Prostate gland (tissue), 2 donors: ENCODE measurements at regions of chrX and their contacts with region 1.

Region 1: GRCh38 chrX:12080265-12080664 is 58.0 kb upstream of the FRMPD4 start:
- DNase-seq: no peak
- H3K4me3 ChIP-seq: no peak overlapping the region
- H3K27ac ChIP-seq: no peak overlapping the region
- H3K4me1 ChIP-seq: no peaks in the 10 kb centered on the region
- H3K27me3 ChIP-seq: no peaks in the 10 kb centered on the region
- CTCF ChIP-seq: peak in 3 of 4 experiments; percentile 41 to 43 (median 42)
- POLR2A ChIP-seq: no peak

Region 2: DNA sequence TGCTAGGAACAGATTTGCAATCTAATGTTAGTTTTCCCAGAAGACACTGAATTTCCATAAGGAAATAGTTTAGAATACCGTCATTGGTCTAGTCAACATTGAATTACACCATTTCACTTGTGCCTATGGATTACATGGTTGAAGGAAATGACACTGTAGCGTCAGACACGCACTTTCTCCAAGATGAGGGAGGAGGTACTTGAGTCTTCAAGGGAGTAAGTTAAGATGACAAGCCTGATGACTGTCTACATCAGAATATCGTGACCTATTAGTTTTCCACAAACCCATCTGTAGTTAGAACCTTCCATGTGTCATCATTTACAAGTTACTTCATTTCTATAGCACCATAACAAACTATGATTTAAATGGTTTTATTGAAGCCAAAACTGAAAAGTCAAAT is 633.3 kb before region 1 on chrX:
- intact Hi-C with region 1: no loop called
- DNase-seq: no peak
- H3K4me3 ChIP-seq: no peak overlapping the region
- H3K27ac ChIP-seq: peak overlapping the region; percentile 19 to 26
- H3K4me1 ChIP-seq: no peaks in the 10 kb centered on the region
- H3K27me3 ChIP-seq: no peaks in the 10 kb centered on the region
- CTCF ChIP-seq: no peak
- POLR2A ChIP-seq: no peak

Region 3: GRCh38 chrX:12567857-12568256 is 487.6 kb after region 1 on chrX:
- intact Hi-C with region 1: loop called (anchors 5 kb)
- DNase-seq: no peak
- H3K4me3 ChIP-seq: no peak overlapping the region
- H3K27ac ChIP-seq: no peak overlapping the region
- H3K4me1 ChIP-seq: no peaks in the 10 kb centered on the region
- H3K27me3 ChIP-seq: no peaks in the 10 kb centered on the region
- CTCF ChIP-seq: peak in 2 of 4 experiments; percentile 25 to 28
- POLR2A ChIP-seq: no peak